ENCODE measurements at regions of chr1 and their contacts with region 1.

Region 1: GRCh38 chr1:28199328-28200233 is 23.1 kb upstream of the PTAFR start:
- DNase-seq: peak; percentile 75
- H3K4me3 Mint-ChIP-seq: peak overlapping the region; percentile 31
- H3K27ac Mint-ChIP-seq: peak overlapping the region; percentile 90
- H3K4me1 Mint-ChIP-seq: peaks cover 42% of the 10 kb centered on the region
- H3K27me3 Mint-ChIP-seq: no peaks in the 10 kb centered on the region

Region 2: DNA sequence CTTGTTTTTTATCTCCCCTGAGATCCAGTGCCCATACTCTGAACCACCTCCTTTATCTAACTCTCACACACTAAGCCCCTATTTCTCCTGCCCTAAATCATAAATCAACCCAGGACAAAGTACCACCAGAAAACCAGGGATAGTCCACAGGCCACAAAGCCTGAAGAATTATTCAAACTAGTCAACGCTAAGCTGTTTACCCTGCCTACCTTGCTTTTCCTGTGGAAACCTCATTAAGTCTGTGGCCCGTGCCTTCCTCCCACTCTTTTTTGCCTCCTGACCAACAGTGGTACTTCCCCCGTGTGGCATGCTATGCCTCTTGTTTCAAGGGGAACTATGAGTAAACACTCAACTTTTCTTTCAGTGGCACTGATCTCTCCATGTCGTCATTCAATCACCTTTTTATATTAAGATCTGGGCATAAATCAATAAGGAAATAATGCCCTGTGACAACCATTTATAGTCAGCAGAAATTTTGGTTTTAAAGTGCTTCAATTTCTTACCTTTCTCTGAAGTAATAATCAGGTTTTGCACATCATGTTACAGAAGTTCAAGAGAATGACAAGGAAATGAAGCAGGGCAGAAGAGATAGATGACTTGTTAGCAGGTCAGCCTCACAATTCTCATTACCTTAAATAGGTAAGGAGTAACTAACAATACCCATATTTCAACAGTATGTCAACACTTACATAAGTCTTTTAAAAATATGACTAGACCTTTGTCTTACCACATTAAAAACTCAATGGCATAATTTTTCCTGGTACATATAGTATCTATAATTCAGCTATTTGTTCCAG is 143.3 kb before region 1 on chr1:
- CTCF ChIA-PET with region 1: no interaction called
- intact Hi-C with region 1: loop called (anchors 1 kb)
- DNase-seq: peak; percentile 85
- H3K4me3 Mint-ChIP-seq: no peak overlapping the region
- H3K27ac Mint-ChIP-seq: peak overlapping the region; percentile 59
- H3K4me1 Mint-ChIP-seq: peaks cover 45% of the 10 kb centered on the region
- H3K27me3 Mint-ChIP-seq: no peaks in the 10 kb centered on the region

Region 3: DNA sequence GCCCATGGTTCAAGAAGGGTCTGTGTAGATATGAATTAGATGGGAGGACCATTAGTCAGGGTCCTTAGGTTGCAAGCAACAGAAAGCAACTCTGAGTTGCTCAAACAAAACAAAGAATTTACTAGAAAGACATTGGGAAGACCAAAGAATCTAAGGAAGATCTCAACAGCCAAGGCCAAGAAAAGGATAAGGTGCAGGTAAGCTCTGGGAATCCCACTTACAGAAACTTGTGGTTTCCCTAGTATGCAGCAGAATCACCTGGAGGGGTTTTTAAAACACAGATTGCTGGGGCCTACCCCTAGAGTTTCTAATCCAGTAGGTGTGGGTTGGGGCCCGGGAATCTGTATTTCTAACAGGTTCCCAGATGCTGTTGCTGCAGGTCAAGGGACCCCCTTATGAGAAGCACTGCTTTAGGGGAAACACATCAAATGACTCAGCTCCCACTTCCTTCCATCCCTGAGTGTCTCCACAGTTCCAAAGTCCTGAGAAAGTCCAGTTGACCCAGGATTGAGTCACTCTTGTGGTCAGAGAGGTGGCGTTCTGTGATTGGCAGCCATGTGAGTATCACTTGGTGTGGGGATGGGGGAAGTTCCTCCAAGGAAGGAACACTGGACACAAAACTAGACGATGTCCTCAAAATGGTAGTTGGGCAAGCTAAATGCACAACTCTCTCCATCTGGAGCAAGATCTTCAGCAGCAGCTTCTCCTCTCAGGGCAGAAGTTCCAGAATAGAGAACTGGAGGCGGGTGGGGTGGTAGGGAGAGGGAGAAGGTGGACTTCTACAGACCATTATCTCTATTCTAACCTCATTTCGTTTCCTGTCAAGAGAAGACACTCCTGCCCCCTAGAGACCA is 87.0 kb before region 1 on chr1:
- CTCF ChIA-PET with region 1: interaction called, 4 read pairs
- intact Hi-C with region 1: loop called (anchors 1 kb)
- DNase-seq: peak; percentile 25
- H3K4me3 Mint-ChIP-seq: no peak overlapping the region
- H3K27ac Mint-ChIP-seq: no peak overlapping the region
- H3K4me1 Mint-ChIP-seq: peaks cover 13% of the 10 kb centered on the region
- H3K27me3 Mint-ChIP-seq: no peaks in the 10 kb centered on the region

Region 4: GRCh38 chr1:28172713-28173150 is 26.8 kb before region 1 on chr1:
- CTCF ChIA-PET with region 1: no interaction called
- intact Hi-C with region 1: loop called (anchors 1 kb)
- DNase-seq: peak; percentile 38
- H3K4me3 Mint-ChIP-seq: no peak overlapping the region
- H3K27ac Mint-ChIP-seq: no peak overlapping the region
- H3K4me1 Mint-ChIP-seq: peaks cover 41% of the 10 kb centered on the region
- H3K27me3 Mint-ChIP-seq: peaks cover 28% of the 10 kb centered on the region